ENCODE measurements at regions of chr5 and their contacts with region 1.

Region 1: DNA sequence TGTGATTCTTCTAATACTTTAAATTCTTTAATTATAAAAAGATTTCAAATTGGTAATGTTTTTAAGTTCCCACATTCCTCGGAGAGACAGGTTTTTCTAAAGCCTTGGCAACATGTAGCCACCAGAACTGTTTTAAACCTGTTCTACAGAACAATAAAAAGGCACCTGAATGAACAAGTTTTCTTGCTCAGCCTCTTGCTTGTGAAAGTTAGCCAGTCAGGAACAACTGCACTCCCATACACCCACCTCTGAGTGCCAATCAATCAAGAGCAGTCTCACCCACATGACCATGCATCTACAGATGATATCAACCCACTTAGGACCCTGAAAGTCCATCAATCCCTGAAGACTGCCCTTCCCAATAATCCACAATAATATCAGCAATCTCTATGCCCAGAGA is 62.3 kb downstream of the AP3B1 start:
- DNase-seq: no peak
- H3K4me3 ChIP-seq: no peak overlapping the region
- H3K27ac ChIP-seq: no peak overlapping the region
- H3K4me1 ChIP-seq: peaks cover 0 to 21% (median 0%) of the 10 kb centered on the region in 4 donors
- H3K27me3 ChIP-seq: no peaks in the 10 kb centered on the region
- CTCF ChIP-seq: no peak

Region 2: GRCh38 chr5:78204240-78204639 is 27.9 kb before region 1 on chr5:
- intact Hi-C with region 1: loop called (anchors 2 kb)
- DNase-seq: no peak
- H3K4me3 ChIP-seq: no peak overlapping the region
- H3K27ac ChIP-seq: no peak overlapping the region
- H3K4me1 ChIP-seq: no peaks in the 10 kb centered on the region
- H3K27me3 ChIP-seq: no peaks in the 10 kb centered on the region
- CTCF ChIP-seq: no peak

Region 3: GRCh38 chr5:78215972-78216371 is 16.2 kb before region 1 on chr5:
- intact Hi-C with region 1: no loop called
- DNase-seq: no peak
- H3K4me3 ChIP-seq: no peak overlapping the region
- H3K27ac ChIP-seq: no peak overlapping the region
- H3K4me1 ChIP-seq: no peaks in the 10 kb centered on the region
- H3K27me3 ChIP-seq: no peaks in the 10 kb centered on the region
- CTCF ChIP-seq: no peak

Region 4: DNA sequence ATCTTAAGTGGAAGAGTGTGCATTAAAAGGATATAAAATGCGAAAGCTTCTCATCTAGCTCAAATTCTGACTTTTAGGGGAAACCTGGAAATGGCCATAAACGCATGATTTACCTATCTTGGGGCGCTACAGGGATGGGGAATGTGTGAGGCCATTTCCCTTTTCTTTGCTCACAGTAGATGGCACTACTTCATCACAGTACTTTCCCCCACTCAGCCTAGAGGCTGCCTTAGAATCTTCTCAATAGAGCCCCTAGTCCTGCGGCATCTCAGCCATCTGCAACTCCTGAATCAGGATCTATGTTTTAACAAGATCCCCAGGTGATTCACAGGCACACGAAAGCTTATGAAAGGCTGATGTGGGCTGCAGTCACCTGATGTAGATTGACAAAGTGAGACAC is 305.7 kb after region 1 on chr5:
- intact Hi-C with region 1: no loop called
- DNase-seq: no peak
- H3K4me3 ChIP-seq: no peak overlapping the region
- H3K27ac ChIP-seq: peak overlapping the region in 1 of 2 donors; percentile 23
- H3K4me1 ChIP-seq: peaks cover 0 to 54% (median 31%) of the 10 kb centered on the region in 4 donors
- H3K27me3 ChIP-seq: no peaks in the 10 kb centered on the region
- CTCF ChIP-seq: peak; percentile 46